ENCODE measurements at regions of chr11 and their contacts with region 1.

Region 1: DNA sequence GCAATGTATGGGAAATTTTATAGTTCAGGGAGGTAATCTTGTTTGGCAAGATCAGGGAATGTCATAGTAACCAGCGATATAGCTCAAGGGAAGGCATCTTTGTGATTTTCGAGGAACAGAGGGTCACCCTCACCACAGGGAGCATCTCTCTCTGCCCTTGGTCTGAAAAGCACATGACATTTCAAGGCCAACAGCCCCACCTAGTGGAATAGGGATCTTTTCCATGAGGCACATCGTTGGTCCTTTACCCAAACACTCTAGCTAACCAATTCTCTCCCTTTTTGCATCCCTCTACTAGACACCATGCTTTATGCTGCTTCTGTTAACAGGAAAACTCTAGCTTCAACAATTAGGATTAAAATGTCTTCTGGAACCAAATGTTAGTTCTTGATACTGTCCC is 179.0 kb downstream of the GRM5 start:
- DNase-seq: peak; percentile 76
- H3K4me3 ChIP-seq: no peak overlapping the region
- H3K27ac ChIP-seq: no peak overlapping the region
- H3K4me1 ChIP-seq: no peaks in the 10 kb centered on the region
- CTCF ChIP-seq: peak; percentile 79

Region 2: GRCh38 chr11:88103337-88104206 is 783.2 kb before region 1 on chr11:
- CTCF ChIA-PET with region 1: no interaction called
- POLR2A ChIA-PET with region 1: no interaction called
- intact Hi-C with region 1: loop called (anchors 10 kb)
- DNase-seq: peak; percentile 51
- H3K4me3 ChIP-seq: no peak overlapping the region
- H3K27ac ChIP-seq: no peak overlapping the region
- H3K4me1 ChIP-seq: no peaks in the 10 kb centered on the region
- CTCF ChIP-seq: peak; percentile 81

Region 3: DNA sequence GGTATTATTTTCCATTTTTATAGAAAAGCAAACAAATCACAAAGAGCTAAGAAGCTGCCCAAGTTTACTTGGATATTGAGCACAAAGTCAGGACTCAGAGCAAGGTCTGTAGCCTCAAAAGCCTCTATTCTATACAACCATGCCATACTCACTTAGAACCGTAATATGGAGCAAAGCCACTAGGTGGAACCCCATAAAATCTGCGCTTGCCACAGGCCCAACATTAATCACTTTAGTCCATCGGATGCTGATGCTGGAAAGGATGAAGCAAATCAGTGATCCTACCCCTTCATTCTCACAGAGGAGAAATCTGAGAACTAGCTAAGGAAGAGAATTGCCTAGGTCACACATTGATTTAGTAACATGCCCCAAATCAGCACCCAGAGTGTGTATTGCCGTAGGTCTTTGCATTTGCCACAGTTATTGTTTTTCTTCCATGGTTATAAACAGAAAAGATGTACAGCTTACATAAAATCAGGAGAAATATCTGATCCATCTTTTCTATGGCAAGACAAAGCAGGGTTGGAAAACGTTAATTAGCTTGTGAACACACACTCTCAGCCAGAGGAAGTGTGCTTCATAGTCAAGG is 654.8 kb before region 1 on chr11:
- CTCF ChIA-PET with region 1: no interaction called
- POLR2A ChIA-PET with region 1: no interaction called
- intact Hi-C with region 1: loop called (anchors 10 kb)
- DNase-seq: peak; percentile 28
- H3K4me3 ChIP-seq: no peak overlapping the region
- H3K27ac ChIP-seq: no peak overlapping the region
- H3K4me1 ChIP-seq: no peaks in the 10 kb centered on the region
- CTCF ChIP-seq: peak; percentile 81

Region 4: DNA sequence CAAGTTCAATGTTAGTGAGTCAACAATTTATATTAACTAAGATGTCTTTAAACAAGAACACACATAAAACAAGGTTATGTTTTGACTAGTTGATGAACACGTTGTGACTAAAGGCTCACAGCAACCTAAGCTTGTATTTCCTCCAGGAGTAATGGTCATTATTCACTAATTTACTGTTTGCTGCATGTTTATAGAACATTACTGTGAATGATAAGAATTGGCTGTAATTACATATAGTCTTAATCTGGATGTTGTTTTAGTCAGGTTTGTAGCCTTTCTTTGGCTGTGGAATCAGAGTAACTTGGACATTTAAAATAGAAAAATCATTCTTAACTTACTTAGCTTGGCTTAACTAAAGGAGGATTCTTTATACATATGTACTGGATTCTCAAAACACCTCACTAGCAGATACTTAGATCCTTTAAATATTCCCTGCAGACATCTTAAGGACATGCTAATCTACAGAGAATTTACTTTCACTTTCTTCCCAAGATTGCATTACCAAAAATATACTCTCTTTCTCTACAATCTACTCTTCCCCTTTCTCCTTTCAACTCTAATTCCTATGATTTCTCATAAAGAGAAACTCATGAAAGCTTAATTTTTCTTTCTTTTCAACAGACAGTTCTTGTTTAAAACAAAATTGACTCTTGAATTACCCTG is 229.6 kb before region 1 on chr11:
- CTCF ChIA-PET with region 1: no interaction called
- POLR2A ChIA-PET with region 1: no interaction called
- intact Hi-C with region 1: no loop called
- DNase-seq: no peak
- H3K4me3 ChIP-seq: no peak overlapping the region
- H3K27ac ChIP-seq: no peak overlapping the region
- H3K4me1 ChIP-seq: no peaks in the 10 kb centered on the region
- CTCF ChIP-seq: no peak

Region 5: DNA sequence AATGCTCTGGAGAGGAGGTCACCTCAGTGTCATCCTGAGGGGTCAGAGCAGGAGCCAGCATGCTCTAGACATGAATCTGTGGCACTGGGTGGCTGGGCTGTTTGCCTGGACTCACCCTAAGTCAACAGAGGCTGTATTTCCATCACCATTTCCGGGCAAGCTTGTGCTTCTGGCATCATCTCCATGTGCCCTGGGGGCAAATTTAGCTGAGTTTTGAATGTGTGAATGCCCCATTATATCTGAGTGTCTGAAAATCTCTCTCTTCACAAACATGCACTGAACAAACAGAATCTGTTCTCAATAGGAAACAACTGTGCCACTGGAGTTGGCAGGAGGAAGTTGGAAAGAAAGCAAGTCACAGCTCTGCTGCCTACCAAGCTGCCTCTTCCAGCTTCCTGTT is 177.2 kb before region 1 on chr11:
- CTCF ChIA-PET with region 1: no interaction called
- POLR2A ChIA-PET with region 1: no interaction called
- intact Hi-C with region 1: no loop called
- DNase-seq: no peak
- H3K4me3 ChIP-seq: no peak overlapping the region
- H3K27ac ChIP-seq: no peak overlapping the region
- H3K4me1 ChIP-seq: no peaks in the 10 kb centered on the region
- CTCF ChIP-seq: no peak

Region 6: DNA sequence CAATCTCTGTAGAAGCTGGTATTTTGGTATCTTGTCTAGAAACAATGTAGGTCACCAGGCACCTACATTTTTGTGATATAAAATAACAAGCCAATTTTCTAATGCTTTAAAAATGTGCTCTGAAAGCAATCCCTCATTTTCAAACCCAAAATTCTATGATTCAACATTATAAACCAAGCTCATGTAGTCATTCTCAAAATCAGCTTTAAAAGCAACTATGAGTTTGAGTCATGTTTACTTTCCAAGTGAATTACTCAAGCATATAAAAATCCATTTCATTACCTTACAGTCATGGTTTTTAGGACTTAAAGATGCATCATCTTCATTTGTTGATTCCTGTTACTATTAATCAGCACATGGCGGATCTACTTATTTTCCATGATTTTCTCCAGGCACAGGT is 37.4 kb before region 1 on chr11:
- CTCF ChIA-PET with region 1: no interaction called
- POLR2A ChIA-PET with region 1: no interaction called
- intact Hi-C with region 1: no loop called
- DNase-seq: no peak
- H3K4me3 ChIP-seq: no peak overlapping the region
- H3K27ac ChIP-seq: no peak overlapping the region
- H3K4me1 ChIP-seq: peaks cover 27% of the 10 kb centered on the region
- CTCF ChIP-seq: no peak

Region 7: GRCh38 chr11:88909500-88909899 is 22.7 kb after region 1 on chr11:
- CTCF ChIA-PET with region 1: no interaction called
- POLR2A ChIA-PET with region 1: no interaction called
- intact Hi-C with region 1: no loop called
- DNase-seq: no peak
- H3K4me3 ChIP-seq: no peak overlapping the region
- H3K27ac ChIP-seq: no peak overlapping the region
- H3K4me1 ChIP-seq: no peaks in the 10 kb centered on the region
- CTCF ChIP-seq: no peak